RWPE1 (cell line): ENCODE measurements at regions of chr2 and their contacts with region 1.

Region 1: DNA sequence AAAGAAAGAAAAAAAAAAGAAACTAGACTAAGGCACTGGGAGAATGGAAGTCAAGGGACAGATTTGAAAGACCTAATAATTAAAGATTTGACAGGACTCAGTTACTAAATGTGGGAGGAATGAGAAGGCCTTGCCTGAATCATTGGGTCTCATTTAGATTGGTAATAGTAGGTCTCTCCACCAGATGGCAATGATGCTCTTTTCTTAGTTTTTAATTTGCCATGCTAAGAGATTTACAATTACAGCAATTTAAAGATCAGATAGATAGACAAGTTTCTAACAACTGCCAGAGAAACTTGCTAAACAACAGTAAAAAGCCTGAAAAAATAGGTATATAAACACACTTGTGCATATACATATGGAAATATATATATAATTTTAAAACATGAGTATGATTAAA is 153.0 kb downstream of the TMEM247 start:
- DNase-seq: peak; percentile 46
- H3K27ac ChIP-seq: no peak overlapping the region
- CTCF ChIP-seq: peak; percentile 62

Region 2: GRCh38 chr2:46621499-46621898 is 10.8 kb before region 1 on chr2:
- CTCF ChIA-PET with region 1: no interaction called
- POLR2A ChIA-PET with region 1: no interaction called
- DNase-seq: no peak
- H3K27ac ChIP-seq: no peak overlapping the region
- CTCF ChIP-seq: no peak

Region 3: DNA sequence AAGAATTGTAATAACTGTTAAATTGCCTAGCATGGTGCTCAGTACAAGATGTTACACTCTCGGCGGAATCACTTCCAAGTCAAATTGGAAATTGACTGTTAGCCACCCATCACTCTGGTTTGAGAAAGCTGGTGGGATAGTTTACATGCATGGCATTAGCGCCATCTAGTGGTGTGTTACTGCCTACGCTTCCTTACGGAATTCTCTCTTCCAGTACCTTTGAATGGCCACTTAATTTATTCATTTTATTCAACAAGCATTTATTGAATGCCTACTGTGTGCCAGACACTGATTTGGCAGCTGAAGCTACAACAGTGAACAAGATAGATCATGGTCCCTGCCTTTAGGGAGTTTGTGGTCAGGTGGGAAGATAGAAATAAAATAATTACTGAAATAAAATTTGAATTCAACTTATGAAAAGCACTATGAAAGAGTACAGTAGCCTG is 18.2 kb after region 1 on chr2:
- CTCF ChIA-PET with region 1: interaction called, 13 read pairs
- POLR2A ChIA-PET with region 1: no interaction called
- DNase-seq: peak; percentile 57
- H3K27ac ChIP-seq: no peak overlapping the region
- CTCF ChIP-seq: peak; percentile 93